ENCODE measurements at regions of chr5 and their contacts with region 1.

Region 1: GRCh38 chr5:74903165-74903787 is 37.1 kb upstream of the FAM169A start:
- DNase-seq: peak; percentile 64
- ATAC-seq: peak; percentile 96
- H3K4me3 ChIP-seq: no peak overlapping the region
- H3K27ac ChIP-seq: no peak overlapping the region
- H3K4me1 ChIP-seq: no peaks in the 10 kb centered on the region
- H3K27me3 ChIP-seq: no peaks in the 10 kb centered on the region
- CTCF ChIP-seq: peak; percentile 72

Region 2: GRCh38 chr5:75330404-75330803 is 427.1 kb after region 1 on chr5:
- CTCF ChIA-PET with region 1: interaction called, 10 read pairs
- POLR2A ChIA-PET with region 1: no interaction called
- intact Hi-C with region 1: no loop called
- DNase-seq: no peak
- ATAC-seq: no peak
- H3K4me3 ChIP-seq: no peak overlapping the region
- H3K27ac ChIP-seq: no peak overlapping the region
- H3K4me1 ChIP-seq: no peaks in the 10 kb centered on the region
- H3K27me3 ChIP-seq: no peaks in the 10 kb centered on the region
- CTCF ChIP-seq: no peak